ENCODE measurements at regions of chr6 and their contacts with region 1.

Region 1: DNA sequence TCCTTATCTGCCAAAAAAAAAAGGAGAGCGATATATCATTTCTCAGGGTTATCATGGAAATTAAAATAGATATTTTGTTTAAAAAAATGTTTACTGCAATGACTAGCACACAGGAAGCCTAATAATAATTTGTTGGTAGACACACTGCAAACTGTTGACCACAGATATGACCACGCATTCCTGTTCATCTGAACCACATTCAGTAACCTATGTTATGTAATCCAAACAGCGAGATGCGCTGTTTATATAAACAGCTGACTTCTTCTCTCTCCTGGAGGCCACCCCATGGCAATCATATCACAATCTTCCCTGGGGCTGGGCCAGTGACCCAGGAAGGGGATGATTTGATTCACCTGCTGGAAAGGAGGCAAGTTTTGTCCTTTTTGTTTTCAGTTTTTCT is 129.3 kb upstream of the UST start:
- DNase-seq: no peak
- H3K4me3 ChIP-seq: no peak overlapping the region
- CTCF ChIP-seq: no peak
- POLR2A ChIP-seq: no peak

Region 2: GRCh38 chr6:147716434-147716833 is 901.1 kb before region 1 on chr6:
- intact Hi-C with region 1: loop called (anchors 5 kb)
- DNase-seq: no peak
- H3K4me3 ChIP-seq: no peak overlapping the region
- CTCF ChIP-seq: no peak
- POLR2A ChIP-seq: no peak